ENCODE measurements at regions of chr2 and their contacts with region 1.

Region 1: DNA sequence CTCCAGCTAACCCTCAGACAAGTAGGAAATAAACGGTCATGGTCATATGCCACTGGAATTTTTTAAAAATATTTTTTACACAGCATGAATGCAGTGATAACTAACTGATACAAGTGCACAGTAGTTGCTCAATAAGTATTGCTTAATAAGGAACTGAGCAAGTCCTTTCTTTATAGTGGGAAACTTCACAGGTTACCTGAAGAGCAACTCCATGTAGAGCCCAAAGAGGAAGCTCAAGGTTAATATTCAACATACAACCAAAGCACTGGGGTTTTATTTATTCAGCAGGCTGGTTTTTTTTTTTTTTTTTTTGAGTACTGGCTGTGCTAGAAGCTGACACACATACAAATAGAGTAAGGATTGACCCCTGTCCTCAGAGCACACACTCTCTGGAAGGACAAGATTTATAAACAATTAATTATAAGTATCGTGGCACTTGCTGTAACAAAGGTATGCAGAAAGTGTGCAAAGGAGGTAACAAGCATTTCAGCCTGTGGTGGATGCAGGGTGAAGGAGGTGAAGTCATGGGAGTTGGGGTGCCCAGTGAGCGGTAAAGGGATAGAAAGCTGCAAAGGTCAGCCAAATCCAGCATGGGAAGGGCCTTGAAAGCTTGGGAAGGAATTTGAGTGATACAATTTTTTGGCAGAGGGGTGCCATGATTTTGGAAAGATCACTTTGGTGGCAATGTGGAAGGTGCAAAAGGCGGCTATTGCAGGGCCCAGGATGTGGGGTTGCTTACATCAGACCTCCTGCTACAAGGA is 52.7 kb downstream of the ATOH8 start:
- DNase-seq: no peak
- ATAC-seq: no peak
- H3K4me3 ChIP-seq: no peak overlapping the region
- H3K27ac ChIP-seq: no peak overlapping the region
- H3K4me1 ChIP-seq: peaks cover 18% of the 10 kb centered on the region
- H3K27me3 ChIP-seq: no peaks in the 10 kb centered on the region
- CTCF ChIP-seq: no peak
- POLR2A ChIP-seq: no peak
- RAD21 ChIP-seq: no peak

Region 2: GRCh38 chr2:85619617-85620016 is 186.9 kb before region 1 on chr2:
- CTCF ChIA-PET with region 1: no interaction called
- POLR2A ChIA-PET with region 1: interaction called, 13 read pairs
- dilution Hi-C with region 1: no loop called
- in situ Hi-C with region 1: no loop called
- intact Hi-C with region 1: no loop called
- DNase-seq: no peak
- ATAC-seq: no peak
- H3K4me3 ChIP-seq: no peak overlapping the region
- H3K27ac ChIP-seq: no peak overlapping the region
- H3K4me1 ChIP-seq: peaks cover 2% of the 10 kb centered on the region; the same call in 1 of the 2 replicates
- H3K27me3 ChIP-seq: no peaks in the 10 kb centered on the region
- CTCF ChIP-seq: no peak
- POLR2A ChIP-seq: no peak
- RAD21 ChIP-seq: no peak

Region 3: DNA sequence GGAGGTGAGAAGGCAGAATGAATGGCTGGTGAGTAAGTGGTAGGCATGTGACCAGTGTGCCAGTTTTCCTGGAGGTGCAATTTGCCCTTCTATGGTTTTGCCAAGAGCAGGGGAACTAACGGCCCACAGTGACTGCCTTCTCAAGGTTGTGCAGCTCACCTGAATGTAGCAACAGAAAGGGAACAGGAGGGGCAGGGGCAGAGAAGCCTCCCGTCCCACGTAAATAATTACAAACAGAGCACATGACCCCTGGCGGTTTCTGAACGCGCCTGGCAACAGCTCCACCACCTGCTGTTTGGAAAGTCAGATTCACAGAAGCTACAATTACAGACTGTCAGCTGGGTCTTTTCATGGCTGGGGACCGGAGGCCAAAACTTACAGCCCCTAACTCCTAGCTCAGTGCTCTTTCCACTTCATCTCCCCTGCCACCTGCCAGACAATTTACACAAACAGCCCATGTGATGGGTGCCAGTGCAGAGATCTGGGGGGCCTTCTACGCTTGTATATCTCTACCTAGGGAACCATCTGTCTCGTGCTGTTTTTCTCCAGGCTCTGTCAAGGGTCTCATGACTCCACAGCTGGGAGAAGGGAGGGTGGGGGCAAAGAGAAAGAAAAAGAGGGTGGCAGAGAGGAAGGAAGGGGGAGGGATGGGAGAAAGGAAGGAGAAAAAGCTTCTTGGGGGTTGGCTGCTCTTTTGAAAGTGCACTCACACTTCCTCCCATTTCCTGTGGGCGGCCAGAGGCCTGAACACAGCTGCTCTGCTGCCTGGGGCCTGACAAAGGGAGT is 229.5 kb after region 1 on chr2:
- CTCF ChIA-PET with region 1: no interaction called
- POLR2A ChIA-PET with region 1: no interaction called
- dilution Hi-C with region 1: no loop called
- in situ Hi-C with region 1: no loop called
- intact Hi-C with region 1: no loop called
- DNase-seq: peak; percentile 86
- ATAC-seq: peak; percentile 83
- H3K4me3 ChIP-seq: no peak overlapping the region
- H3K27ac ChIP-seq: peak overlapping the region; percentile 83
- H3K4me1 ChIP-seq: peaks cover 29% of the 10 kb centered on the region
- H3K27me3 ChIP-seq: no peaks in the 10 kb centered on the region
- CTCF ChIP-seq: peak; percentile 36
- POLR2A ChIP-seq: no peak
- RAD21 ChIP-seq: peak; percentile 45